CD8-positive, alpha-beta T cell (primary cell): ENCODE measurements at regions of chr15 and their contacts with region 1.

Region 1: GRCh38 chr15:44861439-44861910 is 95.0 kb upstream of the TERB2 start:
- DNase-seq: no peak
- ATAC-seq: no peak
- H3K4me3 ChIP-seq: no peak overlapping the region
- H3K4me3 Mint-ChIP-seq: no peak overlapping the region
- H3K27ac ChIP-seq: no peak overlapping the region
- H3K27ac Mint-ChIP-seq: no peak overlapping the region
- H3K4me1 ChIP-seq: no peaks in the 10 kb centered on the region
- H3K4me1 Mint-ChIP-seq: no peaks in the 10 kb centered on the region
- H3K27me3 ChIP-seq: no peaks in the 10 kb centered on the region
- H3K27me3 Mint-ChIP-seq: no peaks in the 10 kb centered on the region
- CTCF ChIP-seq: no peak

Region 2: DNA sequence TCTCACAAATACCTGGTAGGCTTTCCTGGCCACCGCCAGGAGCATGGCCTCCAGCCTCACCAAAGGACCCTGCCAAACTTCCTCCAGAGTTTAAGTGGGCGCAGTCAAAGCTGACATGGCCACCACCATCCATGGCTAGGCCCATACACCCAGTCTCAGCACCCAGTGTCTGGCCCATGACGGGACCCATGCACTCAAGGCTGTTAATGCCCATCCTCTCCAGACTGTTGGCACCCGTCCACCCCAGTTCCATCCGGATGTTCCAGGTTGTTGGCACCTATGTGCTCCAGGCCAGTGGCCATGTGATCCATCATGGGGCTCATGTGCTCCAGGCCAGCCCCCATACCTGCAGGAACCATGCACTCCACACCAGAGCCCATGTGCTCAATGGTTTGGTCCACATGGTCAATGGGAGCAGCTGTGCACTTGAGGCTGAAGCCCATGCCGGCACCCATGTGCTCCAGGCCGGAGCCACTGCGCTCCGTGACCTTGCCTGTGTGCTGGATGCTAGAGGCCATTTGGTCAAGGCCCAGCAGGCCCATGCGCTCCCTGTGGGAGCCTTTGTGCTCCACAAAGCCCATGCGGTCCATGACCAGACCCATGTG is 413.6 kb before region 1 on chr15:
- CTCF ChIA-PET with region 1: no interaction called
- POLR2A ChIA-PET with region 1: no interaction called
- intact Hi-C with region 1: no loop called
- DNase-seq: no peak
- ATAC-seq: no peak
- H3K4me3 ChIP-seq: no peak overlapping the region
- H3K4me3 Mint-ChIP-seq: no peak overlapping the region
- H3K27ac ChIP-seq: no peak overlapping the region
- H3K27ac Mint-ChIP-seq: no peak overlapping the region
- H3K4me1 ChIP-seq: no peaks in the 10 kb centered on the region
- H3K4me1 Mint-ChIP-seq: peaks cover 42% of the 10 kb centered on the region
- H3K27me3 ChIP-seq: no peaks in the 10 kb centered on the region
- H3K27me3 Mint-ChIP-seq: no peaks in the 10 kb centered on the region
- CTCF ChIP-seq: no peak

Region 3: DNA sequence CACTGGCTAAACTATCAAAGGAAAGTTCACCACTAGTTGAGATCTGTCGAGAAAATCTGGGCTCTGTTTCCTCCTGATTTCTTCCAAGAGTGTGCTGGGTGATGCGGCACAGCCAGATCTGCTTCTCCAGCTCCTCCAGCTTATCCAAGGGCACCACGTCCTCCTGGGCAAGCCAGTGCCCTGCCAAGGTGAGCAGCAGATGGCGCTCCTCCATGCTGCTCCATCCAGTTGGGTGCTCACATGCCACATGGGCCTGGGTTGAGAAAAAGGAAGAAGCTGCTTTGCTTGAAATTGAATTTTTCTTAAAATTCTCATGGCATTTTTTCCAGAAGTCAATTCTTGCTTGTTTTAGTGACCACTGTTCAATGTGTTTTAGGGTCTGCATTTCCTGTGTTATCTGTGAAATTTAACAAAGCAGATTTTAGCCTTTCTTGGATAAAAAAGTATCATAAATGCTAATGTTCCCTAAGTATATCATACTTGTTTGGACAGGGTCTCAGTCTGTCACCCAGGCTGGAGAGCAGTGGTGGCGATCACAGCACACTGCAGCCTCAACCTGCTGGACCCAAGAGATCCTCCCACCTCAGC is 277.2 kb before region 1 on chr15:
- CTCF ChIA-PET with region 1: no interaction called
- POLR2A ChIA-PET with region 1: interaction called, 3 read pairs
- intact Hi-C with region 1: loop called in 1 of 2 experiments (anchors 10 kb)
- DNase-seq: peak; percentile 27 to 74 (median 58)
- ATAC-seq: peak; percentile 86
- H3K4me3 ChIP-seq: no peak overlapping the region
- H3K4me3 Mint-ChIP-seq: no peak overlapping the region
- H3K27ac ChIP-seq: no peak overlapping the region
- H3K27ac Mint-ChIP-seq: peak overlapping the region; percentile 8
- H3K4me1 ChIP-seq: no peaks in the 10 kb centered on the region
- H3K4me1 Mint-ChIP-seq: peaks cover 16% of the 10 kb centered on the region
- H3K27me3 ChIP-seq: no peaks in the 10 kb centered on the region
- H3K27me3 Mint-ChIP-seq: no peaks in the 10 kb centered on the region
- CTCF ChIP-seq: peak; percentile 28

Region 4: GRCh38 chr15:44873103-44873502 is 11.6 kb after region 1 on chr15:
- CTCF ChIA-PET with region 1: no interaction called
- POLR2A ChIA-PET with region 1: no interaction called
- intact Hi-C with region 1: no loop called
- DNase-seq: no peak
- ATAC-seq: no peak
- H3K4me3 ChIP-seq: no peak overlapping the region
- H3K4me3 Mint-ChIP-seq: no peak overlapping the region
- H3K27ac ChIP-seq: no peak overlapping the region
- H3K27ac Mint-ChIP-seq: no peak overlapping the region
- H3K4me1 ChIP-seq: no peaks in the 10 kb centered on the region
- H3K4me1 Mint-ChIP-seq: no peaks in the 10 kb centered on the region
- H3K27me3 ChIP-seq: no peaks in the 10 kb centered on the region
- H3K27me3 Mint-ChIP-seq: peaks cover 6% of the 10 kb centered on the region
- CTCF ChIP-seq: no peak

Region 5: GRCh38 chr15:44918136-44918535 is 56.7 kb after region 1 on chr15:
- CTCF ChIA-PET with region 1: no interaction called
- POLR2A ChIA-PET with region 1: no interaction called
- intact Hi-C with region 1: loop called in 1 of 2 experiments (anchors 10 kb)
- DNase-seq: no peak
- ATAC-seq: no peak
- H3K4me3 ChIP-seq: no peak overlapping the region
- H3K4me3 Mint-ChIP-seq: no peak overlapping the region
- H3K27ac ChIP-seq: no peak overlapping the region
- H3K27ac Mint-ChIP-seq: no peak overlapping the region
- H3K4me1 ChIP-seq: no peaks in the 10 kb centered on the region
- H3K4me1 Mint-ChIP-seq: no peaks in the 10 kb centered on the region
- H3K27me3 ChIP-seq: no peaks in the 10 kb centered on the region
- H3K27me3 Mint-ChIP-seq: no peaks in the 10 kb centered on the region
- CTCF ChIP-seq: no peak